Endothelial cell of umbilical vein (primary cell): ENCODE measurements at regions of chr5 and their contacts with region 1.

Region 1: DNA sequence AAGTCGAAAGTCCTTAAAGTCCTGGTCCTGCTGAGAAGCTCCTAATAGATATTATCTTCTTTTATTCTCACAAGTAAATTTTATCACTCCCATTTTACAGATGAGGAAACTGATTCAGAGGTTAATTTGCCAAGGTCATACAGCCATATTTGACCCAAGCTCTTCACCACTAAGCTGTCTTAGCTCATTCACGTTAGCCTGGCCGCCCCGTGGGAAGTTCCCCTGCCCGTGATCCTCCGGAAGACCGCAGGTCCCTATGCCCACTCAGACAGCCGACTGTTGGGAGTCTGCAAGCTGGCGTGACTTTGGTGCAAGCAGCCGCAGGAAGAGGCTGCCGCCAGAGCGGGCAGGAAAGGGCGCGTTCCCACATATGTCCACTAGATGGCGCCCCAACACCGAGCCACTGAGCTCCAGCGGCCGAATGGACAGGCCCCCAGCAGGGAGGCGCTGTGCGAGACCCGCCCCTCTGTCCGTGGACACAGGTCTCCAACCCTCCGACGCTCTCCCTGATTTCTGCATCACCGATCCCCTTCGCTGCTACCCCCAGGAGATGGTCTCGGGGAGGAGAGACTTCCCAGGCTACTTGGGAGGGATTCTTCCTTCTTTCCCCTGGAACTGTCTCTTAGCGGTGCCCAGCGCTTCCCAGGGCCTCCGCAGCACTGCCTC is 10.0 kb upstream of the ARAP3 start:
- DNase-seq: peak; percentile 87
- H3K4me3 ChIP-seq: peak overlapping the region in 2 of 3 experiments; percentile 24 to 28
- H3K27ac ChIP-seq: no peak overlapping the region
- H3K4me1 ChIP-seq: peaks cover 21% of the 10 kb centered on the region
- H3K27me3 ChIP-seq: no peaks in the 10 kb centered on the region
- CTCF ChIP-seq: peak; percentile 96 to 99
- POLR2A ChIP-seq: no peak

Region 2: GRCh38 chr5:140882591-140882899 is 809.5 kb before region 1 on chr5:
- CTCF ChIA-PET with region 1: no interaction called
- POLR2A ChIA-PET with region 1: no interaction called
- dilution Hi-C with region 1: no loop called
- intact Hi-C with region 1: no loop called
- DNase-seq: no peak
- H3K4me3 ChIP-seq: no peak overlapping the region
- H3K27ac ChIP-seq: no peak overlapping the region
- H3K4me1 ChIP-seq: no peaks in the 10 kb centered on the region
- H3K27me3 ChIP-seq: peaks cover 0 to 7% of the 10 kb centered on the region in 2 experiments
- CTCF ChIP-seq: no peak
- POLR2A ChIP-seq: no peak

Region 3: GRCh38 chr5:141608557-141608956 is 83.4 kb before region 1 on chr5:
- CTCF ChIA-PET with region 1: no interaction called
- POLR2A ChIA-PET with region 1: no interaction called
- dilution Hi-C with region 1: no loop called
- intact Hi-C with region 1: no loop called
- DNase-seq: no peak
- H3K4me3 ChIP-seq: no peak overlapping the region
- H3K27ac ChIP-seq: no peak overlapping the region
- H3K4me1 ChIP-seq: peaks cover 28% of the 10 kb centered on the region
- H3K27me3 ChIP-seq: no peaks in the 10 kb centered on the region
- CTCF ChIP-seq: no peak
- POLR2A ChIP-seq: no peak

Region 4: DNA sequence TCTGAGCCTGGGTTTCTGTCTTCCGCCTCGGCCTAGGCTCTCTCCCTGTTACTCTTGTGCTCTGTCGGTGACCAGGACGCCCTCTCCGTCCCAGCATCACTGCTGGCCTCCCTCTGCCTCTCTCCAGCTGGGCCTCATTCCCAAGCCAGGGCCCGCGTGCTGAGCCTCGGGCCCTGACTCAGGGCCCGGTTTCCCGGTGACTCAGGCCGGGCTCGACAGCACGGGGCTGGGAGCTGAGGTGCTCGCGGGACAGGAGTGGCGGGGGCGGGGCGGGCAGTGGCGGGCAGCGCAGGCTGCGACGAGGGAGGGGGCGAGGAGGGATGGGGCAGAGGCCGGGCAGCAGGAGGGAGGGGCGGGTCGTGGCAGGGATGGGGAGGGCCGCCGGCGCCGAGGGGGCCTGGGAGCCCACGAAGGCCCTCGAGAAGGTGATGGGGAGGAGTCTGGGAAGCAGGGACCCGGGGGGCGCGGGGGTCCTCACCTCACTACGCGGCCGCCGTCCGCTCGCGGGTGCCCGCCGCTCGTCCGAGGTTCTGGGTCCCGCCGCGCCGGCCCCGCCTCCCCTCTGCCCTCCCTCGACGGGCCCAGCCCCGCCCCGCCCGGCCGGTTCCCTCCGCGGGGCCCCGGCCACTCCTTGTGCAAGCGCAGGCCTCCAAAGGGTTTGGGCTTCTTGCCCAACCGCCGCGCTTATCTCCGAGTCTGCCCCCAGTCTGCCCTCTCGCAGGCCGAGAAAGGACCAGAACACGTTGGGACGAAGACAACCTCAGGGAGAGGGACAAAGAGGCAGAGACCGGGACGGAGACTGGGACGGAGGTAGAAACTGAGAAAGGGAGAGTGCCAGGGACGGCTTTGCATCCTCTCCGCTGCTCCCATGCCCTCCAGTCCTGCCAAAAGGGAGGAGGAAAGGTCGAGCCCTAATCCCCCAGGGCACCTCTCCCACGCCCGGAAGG is 10.0 kb before region 1 on chr5 and contains the start of gene ARAP3:
- CTCF ChIA-PET with region 1: interaction called, 26 read pairs
- POLR2A ChIA-PET with region 1: interaction called, 4 read pairs
- dilution Hi-C with region 1: no loop called
- intact Hi-C with region 1: no loop called
- DNase-seq: peak; percentile 92
- H3K4me3 ChIP-seq: peak within 1 kb of the TSS; percentile 5 to 69 (median 45)
- H3K27ac ChIP-seq: peak within 1 kb of the TSS; percentile 100
- H3K4me1 ChIP-seq: peaks cover 62% of the 10 kb centered on the region
- H3K27me3 ChIP-seq: no peaks in the 10 kb centered on the region
- CTCF ChIP-seq: no peak
- POLR2A ChIP-seq: peak; percentile 56
- total RNA-seq, gene ARAP3: 136 and 142 TPM in 2 replicates

Region 5: DNA sequence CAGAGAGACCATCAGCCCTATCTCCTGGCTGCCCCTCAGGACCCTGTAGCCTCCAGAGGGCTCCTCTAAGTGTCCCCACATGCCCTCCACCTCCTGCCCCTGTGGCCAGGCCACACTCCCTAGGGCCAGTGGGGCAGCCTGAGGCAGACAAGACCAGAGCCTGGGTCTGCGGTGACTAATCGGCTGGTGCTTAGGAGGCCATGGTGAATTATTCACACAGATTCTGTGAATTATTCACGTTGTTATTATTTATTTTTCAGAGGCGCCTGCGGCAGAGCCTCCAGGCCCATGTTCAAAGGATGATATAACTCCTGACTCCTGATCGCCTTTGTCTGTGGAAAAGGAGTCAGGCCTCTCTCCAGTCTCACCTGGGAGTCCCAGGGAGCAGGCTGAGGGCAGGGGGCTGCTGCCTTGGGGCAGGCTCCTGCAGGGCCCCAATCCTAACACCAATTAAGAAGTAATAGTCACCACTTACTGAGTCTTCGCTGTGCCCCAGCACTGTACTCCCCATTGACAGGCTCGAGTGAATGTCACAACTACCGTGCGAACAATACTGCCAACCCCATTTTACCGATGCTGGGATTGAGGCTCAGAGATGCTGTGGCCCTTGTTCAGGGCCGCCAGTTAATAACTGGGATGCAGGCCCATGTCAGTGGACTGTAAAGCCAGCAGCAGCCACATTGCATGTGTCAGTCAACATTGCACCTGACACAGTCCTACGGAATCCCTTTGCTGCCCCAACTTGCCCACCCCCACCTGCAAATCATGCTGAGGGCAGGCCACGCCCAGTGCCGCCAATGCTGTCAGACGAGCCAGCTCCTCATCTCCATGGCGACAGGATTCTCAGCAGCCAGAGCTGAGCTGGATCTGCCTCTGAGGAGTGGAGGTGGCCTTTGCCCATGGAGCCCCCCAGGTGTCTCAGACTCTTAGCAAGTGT is 91.3 kb after region 1 on chr5:
- CTCF ChIA-PET with region 1: interaction called, 10 read pairs
- POLR2A ChIA-PET with region 1: no interaction called
- dilution Hi-C with region 1: no loop called
- intact Hi-C with region 1: no loop called
- DNase-seq: no peak
- H3K4me3 ChIP-seq: no peak overlapping the region
- H3K27ac ChIP-seq: no peak overlapping the region
- H3K4me1 ChIP-seq: no peaks in the 10 kb centered on the region
- H3K27me3 ChIP-seq: peaks cover 1 to 2% of the 10 kb centered on the region in 2 experiments
- CTCF ChIP-seq: no peak
- POLR2A ChIP-seq: no peak

Region 6: DNA sequence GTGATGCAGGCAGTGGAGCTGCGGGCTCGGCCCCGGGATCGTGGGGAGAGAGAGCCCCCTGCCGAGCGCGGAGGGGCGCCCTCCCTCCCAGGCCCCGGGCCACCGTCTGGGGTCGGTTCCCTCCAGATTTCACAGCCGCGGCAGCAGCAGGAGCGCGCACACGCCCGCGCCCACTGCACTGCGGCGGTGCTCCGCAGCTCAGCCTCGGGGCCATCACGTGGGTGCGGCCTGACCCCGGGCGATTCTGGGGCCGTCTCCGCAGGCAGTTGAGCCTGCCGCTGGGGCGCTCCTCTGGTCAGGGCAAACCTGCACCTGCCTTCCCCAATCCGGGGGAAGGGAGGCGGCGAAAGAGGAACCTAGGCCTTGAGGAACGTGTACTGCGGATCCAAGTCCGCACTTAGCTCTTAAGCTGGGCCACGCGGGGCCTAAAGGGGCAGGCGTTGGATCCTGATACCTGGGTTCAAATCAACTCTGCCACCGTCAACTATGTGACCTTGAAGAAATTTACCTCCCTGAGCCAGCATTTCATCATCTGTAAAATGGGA is 222.3 kb after region 1 on chr5:
- CTCF ChIA-PET with region 1: interaction called, 26 read pairs
- POLR2A ChIA-PET with region 1: no interaction called
- dilution Hi-C with region 1: no loop called
- intact Hi-C with region 1: no loop called
- DNase-seq: peak; percentile 9
- H3K4me3 ChIP-seq: peak overlapping the region in 1 of 3 experiments; percentile 20
- H3K27ac ChIP-seq: no peak overlapping the region
- H3K4me1 ChIP-seq: peaks cover 3% of the 10 kb centered on the region
- H3K27me3 ChIP-seq: peaks cover 9 to 14% of the 10 kb centered on the region in 2 experiments
- CTCF ChIP-seq: peak in 1 of 2 donors; percentile 43
- POLR2A ChIP-seq: no peak

Region 7: DNA sequence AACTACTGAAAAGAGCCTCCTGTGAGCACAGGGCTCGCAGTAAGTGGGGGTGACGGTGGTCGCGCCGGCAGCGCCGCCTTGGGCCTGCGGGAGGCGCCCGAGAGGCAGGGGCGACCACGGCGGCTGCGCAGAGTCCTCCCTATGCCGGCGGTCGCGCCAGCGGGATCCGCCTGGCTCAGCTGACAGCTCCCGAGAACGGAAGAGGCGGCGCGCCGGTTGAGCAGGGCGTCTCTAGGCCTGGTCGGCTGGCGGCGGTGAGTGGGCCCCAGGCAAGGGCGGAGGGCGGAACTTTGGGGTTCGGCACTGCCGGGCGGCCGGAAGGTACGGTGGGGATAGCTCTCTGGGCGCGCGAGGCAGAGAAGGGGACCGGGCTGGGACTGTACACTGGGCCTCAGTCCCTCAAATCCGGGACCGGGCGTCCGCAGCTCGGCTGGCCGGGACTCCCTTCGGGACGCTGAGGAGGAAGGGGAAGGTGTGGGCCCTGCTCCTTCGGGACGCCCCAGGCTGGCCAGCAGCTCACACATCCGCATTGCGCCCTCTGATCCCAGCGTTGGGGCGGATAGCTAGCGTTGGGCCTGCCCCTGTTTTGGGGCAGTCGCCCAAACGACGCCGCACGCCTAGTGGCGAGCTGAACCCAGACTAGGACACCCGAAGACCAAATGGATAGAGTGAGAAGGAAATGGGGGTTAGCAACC is 277.1 kb after region 1 on chr5 and contains the start of gene RNF14:
- CTCF ChIA-PET with region 1: interaction called, 21 read pairs
- POLR2A ChIA-PET with region 1: interaction called, 3 read pairs
- dilution Hi-C with region 1: no loop called
- intact Hi-C with region 1: loop called (anchors 2 kb)
- DNase-seq: peak; percentile 95
- H3K4me3 ChIP-seq: peak within 1 kb of the TSS; percentile 89 to 97 (median 97)
- H3K27ac ChIP-seq: peak within 1 kb of the TSS; percentile 77
- H3K4me1 ChIP-seq: peaks cover 24% of the 10 kb centered on the region
- H3K27me3 ChIP-seq: no peaks in the 10 kb centered on the region
- CTCF ChIP-seq: peak; percentile 93 to 98
- POLR2A ChIP-seq: peak; percentile 90
- total RNA-seq, gene RNF14: 53.1 and 55.9 TPM in 2 replicates

Region 8: GRCh38 chr5:142012792-142013388 is 320.9 kb after region 1 on chr5 and contains the start of gene GNPDA1:
- CTCF ChIA-PET with region 1: interaction called, 4 read pairs
- POLR2A ChIA-PET with region 1: no interaction called
- dilution Hi-C with region 1: no loop called
- intact Hi-C with region 1: loop called (anchors 2 kb)
- DNase-seq: peak; percentile 67
- H3K4me3 ChIP-seq: peak within 1 kb of the TSS; percentile 51 to 80 (median 69)
- H3K27ac ChIP-seq: peak within 1 kb of the TSS; percentile 83
- H3K4me1 ChIP-seq: peaks cover 45% of the 10 kb centered on the region
- H3K27me3 ChIP-seq: no peaks in the 10 kb centered on the region
- CTCF ChIP-seq: peak in 1 of 2 donors; percentile 9
- POLR2A ChIP-seq: peak; percentile 88
- total RNA-seq, gene GNPDA1: 49.3 and 52.1 TPM in 2 replicates